ENCODE measurements at regions of chr17 and their contacts with region 1.

Region 1: DNA sequence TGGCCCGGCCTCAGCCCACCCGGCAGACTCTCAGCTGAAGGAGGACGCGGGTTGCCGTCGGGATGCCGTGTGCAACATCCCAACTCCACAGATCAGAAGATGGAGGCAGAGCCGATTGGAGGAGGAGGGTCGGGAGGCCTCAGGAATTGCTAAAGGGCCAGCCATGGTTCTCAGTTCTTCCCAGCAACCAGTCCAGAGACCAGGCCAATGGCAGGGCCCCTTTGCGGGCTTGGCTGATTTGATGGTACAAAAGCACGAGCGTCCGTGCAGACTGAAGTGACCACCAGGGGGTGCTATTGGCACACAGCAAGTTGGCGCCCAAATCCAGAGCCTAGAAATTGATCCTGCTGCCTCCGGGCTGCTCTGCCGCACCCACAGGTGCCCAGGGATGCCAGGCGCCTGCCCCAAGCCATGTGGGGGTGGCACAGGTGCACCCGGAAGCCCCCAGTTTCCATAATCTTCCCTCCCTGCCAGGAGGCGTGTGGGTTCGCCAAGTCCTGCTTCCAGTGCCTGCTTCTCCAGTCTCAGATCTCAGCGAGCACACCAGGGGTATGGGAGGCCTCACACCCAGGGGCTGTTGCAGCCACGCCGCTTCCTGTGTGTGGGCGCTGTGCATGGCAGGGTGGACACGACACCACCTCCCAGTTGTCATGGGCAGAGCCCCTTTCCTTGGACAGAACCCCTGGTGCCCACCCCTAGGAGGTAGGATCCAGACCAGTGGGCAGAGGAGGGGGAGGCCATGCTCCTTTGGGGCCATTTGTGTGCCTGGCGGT is 7.1 kb upstream of the TEX19 start:
- DNase-seq: peak; percentile 86
- H3K4me3 ChIP-seq: no peak overlapping the region
- H3K27ac ChIP-seq: no peak overlapping the region
- H3K4me1 ChIP-seq: peaks cover 4% of the 10 kb centered on the region
- H3K27me3 ChIP-seq: peaks cover 3% of the 10 kb centered on the region
- CTCF ChIP-seq: peak; percentile 93

Region 2: GRCh38 chr17:82414548-82415281 is 62.8 kb after region 1 on chr17:
- intact Hi-C with region 1: loop called (anchors 1 kb)
- DNase-seq: peak; percentile 69
- H3K4me3 ChIP-seq: no peak overlapping the region
- H3K27ac ChIP-seq: no peak overlapping the region
- H3K4me1 ChIP-seq: no peaks in the 10 kb centered on the region
- H3K27me3 ChIP-seq: no peaks in the 10 kb centered on the region
- CTCF ChIP-seq: peak; percentile 69

Region 3: DNA sequence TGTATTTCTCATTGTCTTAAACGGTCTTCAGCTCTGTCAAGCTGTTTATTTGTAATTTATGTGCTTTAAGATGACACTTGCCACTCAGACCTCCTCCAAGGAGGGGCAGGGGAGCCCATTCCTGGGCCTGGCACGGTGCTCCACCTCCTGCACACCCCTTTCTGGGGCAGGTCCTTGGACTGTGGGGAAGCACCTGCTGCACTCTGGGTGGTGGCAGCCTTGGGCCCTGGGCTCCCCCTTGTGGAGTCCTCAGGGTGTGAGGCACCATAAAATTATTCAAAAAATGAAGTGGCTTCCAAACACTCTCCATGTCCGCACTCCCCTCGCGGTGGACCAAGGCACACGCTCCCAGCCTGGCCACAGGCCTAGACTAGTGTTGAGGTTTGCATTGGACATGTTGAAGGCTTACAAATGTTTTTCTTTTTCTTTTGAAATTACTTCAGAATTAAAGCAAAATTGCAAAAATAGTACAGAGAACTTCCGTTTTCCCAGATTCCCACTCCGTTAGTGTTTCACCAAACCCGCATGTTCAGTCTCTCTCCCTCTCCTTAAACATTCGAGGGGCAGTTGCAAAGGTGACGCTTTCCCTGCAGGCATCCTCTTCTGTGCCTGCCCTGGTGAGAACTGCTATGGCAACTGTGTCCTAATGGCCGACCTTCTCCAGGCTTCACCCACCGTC is 200.0 kb after region 1 on chr17:
- intact Hi-C with region 1: loop called (anchors 2 kb)
- DNase-seq: peak; percentile 81
- H3K4me3 ChIP-seq: no peak overlapping the region
- H3K27ac ChIP-seq: no peak overlapping the region
- H3K4me1 ChIP-seq: peaks cover 20% of the 10 kb centered on the region
- H3K27me3 ChIP-seq: no peaks in the 10 kb centered on the region
- CTCF ChIP-seq: peak; percentile 79

Region 4: DNA sequence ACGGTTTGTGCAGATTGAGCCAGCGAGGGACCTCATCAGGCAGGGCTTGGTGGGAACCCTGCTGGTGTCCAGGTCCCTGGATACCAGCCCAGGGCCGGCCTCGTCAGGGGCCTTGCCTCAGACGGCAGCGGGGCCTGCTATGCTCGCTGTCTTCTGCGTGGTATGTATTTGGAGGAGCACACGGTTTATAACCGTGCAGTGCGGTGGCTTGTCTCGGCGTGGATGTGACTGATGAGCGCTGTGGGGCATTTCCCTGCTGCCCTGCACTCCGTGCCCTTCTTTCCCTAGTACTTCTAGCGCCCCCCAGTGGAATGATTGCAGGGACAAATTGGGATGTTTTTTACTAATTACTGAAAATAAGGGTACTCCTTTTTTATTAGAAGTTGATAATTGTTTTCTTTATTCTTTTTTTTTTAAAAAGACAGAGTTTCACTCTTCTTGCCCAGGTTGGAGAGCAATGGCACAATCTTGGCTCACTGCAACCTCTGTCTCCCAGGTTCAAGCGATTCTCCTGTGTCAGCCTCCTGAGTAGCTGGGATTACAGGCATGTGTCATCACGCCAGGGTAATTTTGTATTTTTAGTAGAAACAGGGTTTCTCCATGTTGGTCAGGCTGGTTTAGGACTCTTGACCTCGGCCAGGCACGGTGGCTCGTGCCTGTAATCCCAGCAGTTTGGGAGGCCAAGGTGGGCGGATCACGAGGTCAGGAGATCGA is 415.3 kb after region 1 on chr17:
- intact Hi-C with region 1: loop called (anchors 10 kb)
- DNase-seq: peak; percentile 85
- H3K4me3 ChIP-seq: no peak overlapping the region
- H3K27ac ChIP-seq: no peak overlapping the region
- H3K4me1 ChIP-seq: no peaks in the 10 kb centered on the region
- H3K27me3 ChIP-seq: no peaks in the 10 kb centered on the region
- CTCF ChIP-seq: peak; percentile 56

Measured in colonic mucosa (tissue), 4 donors.